Aorta (tissue), 5 donors: ENCODE measurements at regions of chr3 and their contacts with region 1.

Region 1: GRCh38 chr3:24420224-24420623 is 74.4 kb downstream of the THRB start:
- DNase-seq: no peak
- ATAC-seq: no peak
- H3K4me3 ChIP-seq: no peak overlapping the region
- H3K27ac ChIP-seq: peak overlapping the region in 1 of 2 donors; percentile 26
- H3K4me1 ChIP-seq: peaks cover 6 to 16% of the 10 kb centered on the region in 2 donors
- H3K27me3 ChIP-seq: no peaks in the 10 kb centered on the region

Region 2: DNA sequence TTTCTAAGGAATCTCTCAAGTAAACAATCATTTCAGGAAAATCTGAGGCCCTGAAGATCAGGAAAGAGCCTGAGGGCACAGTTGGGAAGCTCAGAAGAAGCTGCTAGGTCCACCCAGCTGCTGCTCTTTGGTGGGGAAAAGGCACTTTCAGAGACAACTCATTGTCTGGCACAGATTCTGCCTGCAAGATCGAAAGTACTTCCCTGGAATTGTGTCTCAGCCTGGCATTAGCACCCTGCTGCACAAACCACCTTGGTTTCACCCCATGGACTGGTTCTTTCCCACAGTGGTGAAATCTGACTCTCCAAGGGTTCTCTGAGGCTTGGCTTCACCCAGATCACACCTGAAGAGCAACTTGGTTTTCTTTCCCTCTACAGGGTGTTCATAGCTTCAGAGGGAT is 55.7 kb after region 1 on chr3:
- intact Hi-C with region 1: loop called in 1 of 2 experiments (anchors 10 kb)
- DNase-seq: no peak
- ATAC-seq: no peak
- H3K4me3 ChIP-seq: no peak overlapping the region
- H3K27ac ChIP-seq: peak overlapping the region in 1 of 2 donors; percentile 20
- H3K4me1 ChIP-seq: peaks cover 7 to 8% of the 10 kb centered on the region in 2 donors
- H3K27me3 ChIP-seq: no peaks in the 10 kb centered on the region